Activated CD8-positive, alpha-beta memory T cell treated with anti-CD3 and anti-CD28 coated beads, Interleukin-2, amount 10 ng/mL, durations not matched to agents 7 days and 5 days (primary cell): ENCODE measurements at regions of chr4 and their contacts with region 1.

Region 1: DNA sequence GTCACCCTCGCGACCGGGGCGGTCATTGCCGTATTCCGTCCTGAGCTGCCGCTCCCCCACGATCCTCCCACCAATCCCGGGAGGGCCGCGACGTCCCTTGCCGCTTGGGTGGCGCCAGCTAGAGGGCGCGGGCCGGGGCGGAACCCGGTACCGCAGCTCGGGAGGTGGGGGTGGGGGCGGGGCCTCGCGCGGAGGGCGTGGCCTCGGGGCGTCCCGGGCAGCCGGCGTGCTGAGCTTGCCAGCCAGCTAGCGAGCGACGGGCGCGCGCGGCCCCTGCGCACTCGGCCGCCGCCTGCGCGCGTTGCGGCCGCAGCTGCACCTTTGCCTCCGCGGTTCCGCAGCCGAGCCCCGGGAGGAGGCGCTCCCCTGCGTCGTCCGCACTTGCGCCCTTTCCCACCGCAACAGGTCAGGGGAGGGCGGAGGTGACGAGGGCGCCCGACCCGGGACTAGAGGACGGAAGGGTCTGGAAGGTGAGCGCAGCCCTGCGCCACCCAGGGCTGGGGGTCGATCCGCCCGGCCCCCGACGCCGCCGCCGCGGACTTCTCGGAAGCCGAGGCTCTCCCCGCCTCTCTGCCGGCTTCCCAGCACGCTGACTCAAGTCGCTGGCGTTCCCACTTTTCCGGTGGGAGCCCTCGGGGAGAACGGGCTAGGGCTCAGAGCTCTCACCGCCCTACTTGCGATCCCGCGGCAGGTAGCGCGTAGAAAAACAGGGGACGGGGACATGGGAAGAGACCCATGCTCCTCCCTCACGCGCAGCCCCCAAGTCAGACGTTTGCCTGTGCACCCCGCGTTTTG is at the start of gene AFF1:
- DNase-seq: peak; percentile 94
- ATAC-seq: peak; percentile 81
- H3K4me3 Mint-ChIP-seq: peak within 1 kb of the TSS; percentile 80
- H3K27ac Mint-ChIP-seq: peak within 1 kb of the TSS; percentile 94
- H3K4me1 Mint-ChIP-seq: peaks cover 43% of the 10 kb centered on the region
- H3K27me3 Mint-ChIP-seq: no peaks in the 10 kb centered on the region
- total RNA-seq, gene AFF1: 42.3 to 67.5 TPM

Region 2: DNA sequence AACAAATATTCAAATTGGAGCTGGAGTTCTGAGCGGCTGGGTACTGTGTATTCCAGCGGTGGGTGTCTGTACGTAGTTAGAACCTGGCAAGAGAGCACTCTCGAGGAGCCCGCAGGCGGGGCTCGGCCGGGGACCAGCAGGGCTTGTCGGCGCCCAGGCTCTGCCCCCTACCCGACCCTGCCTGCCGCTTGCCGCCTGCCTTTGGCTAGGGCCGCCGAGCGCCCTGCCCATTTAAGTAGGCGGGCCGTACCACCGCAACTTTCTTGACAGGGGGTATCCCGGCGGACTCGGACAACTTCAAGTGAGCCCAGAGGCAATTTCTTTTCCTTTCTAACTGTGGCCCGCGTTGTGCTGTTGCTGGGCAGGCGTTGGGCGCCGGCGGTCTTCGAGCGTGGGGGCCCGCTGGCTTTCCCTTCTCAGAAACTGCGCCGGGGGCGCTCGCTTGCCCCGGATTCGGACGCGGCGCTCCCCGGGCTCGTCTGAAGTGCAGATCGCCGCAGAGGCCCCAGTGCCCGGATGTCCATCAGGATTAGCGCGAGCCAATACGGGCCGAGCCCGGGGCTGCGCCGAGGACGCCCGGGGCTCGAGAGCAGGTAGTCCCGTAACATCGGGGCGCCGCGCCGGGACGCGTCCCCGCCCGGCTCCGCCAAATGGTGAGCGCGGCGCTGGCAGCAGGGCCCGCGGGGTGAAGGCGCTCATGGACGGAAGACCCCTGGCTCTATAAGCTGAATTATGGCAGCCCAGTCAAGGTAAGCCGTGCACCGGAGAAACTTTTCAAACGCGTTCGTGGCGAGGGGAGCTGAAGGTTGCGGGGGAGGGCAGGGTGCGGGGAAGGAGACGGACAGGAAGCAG is 71.9 kb after region 1 on chr4:
- CTCF ChIA-PET with region 1: interaction called, 53 read pairs
- DNase-seq: peak; percentile 94
- ATAC-seq: peak; percentile 86
- H3K4me3 Mint-ChIP-seq: peak overlapping the region; percentile 95
- H3K27ac Mint-ChIP-seq: peak overlapping the region; percentile 98
- H3K4me1 Mint-ChIP-seq: peaks cover 55% of the 10 kb centered on the region
- H3K27me3 Mint-ChIP-seq: no peaks in the 10 kb centered on the region